ENCODE measurements at regions of chrX and their contacts with region 1.

Region 1: DNA sequence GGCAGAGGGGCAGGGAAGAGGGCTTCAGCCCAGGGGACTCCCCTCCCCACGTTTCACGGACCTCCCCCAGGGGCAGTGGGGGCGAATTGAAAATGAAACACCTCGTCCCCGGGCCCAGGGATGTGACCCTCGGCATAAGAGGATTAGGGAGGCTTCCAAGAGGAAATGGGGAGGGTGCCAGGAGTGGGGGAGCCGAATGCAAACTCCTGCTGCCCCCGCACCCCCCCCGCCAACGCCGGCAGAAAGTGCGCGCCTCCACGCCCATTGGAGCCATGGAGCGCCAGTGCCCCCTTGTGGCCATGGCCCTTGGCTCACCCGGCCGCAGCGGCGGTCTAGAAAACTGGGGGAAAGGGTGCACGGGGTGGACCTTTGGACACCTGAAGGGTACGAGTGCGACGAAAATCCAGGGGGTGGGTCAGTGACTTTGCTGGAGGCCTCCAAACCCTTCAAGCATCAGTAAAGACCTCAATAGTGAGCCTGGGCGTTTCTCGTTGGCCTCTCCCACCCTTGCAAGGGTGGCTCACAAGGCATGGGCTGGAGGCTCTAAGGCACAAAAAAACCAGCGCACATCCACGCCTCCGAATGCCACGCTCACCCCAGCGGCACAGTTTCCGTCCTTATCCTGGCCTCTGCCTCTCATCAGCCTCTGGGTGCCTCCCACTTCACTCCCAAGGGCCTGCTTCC is 120.8 kb upstream of the PJA1 start:
- DNase-seq: peak; percentile 64
- H3K4me3 ChIP-seq: peak overlapping the region in 3 of 4 donors; percentile 20 to 48 (median 31)
- H3K27ac ChIP-seq: peak overlapping the region; percentile 22 to 56 (median 52)
- H3K4me1 ChIP-seq: peaks cover 0 to 8% (median 3%) of the 10 kb centered on the region in 4 donors
- H3K27me3 ChIP-seq: no peaks in the 10 kb centered on the region
- CTCF ChIP-seq: peak; percentile 71 to 91 (median 77)
- EP300 ChIP-seq: no peak
- POLR2A ChIP-seq: no peak

Region 2: DNA sequence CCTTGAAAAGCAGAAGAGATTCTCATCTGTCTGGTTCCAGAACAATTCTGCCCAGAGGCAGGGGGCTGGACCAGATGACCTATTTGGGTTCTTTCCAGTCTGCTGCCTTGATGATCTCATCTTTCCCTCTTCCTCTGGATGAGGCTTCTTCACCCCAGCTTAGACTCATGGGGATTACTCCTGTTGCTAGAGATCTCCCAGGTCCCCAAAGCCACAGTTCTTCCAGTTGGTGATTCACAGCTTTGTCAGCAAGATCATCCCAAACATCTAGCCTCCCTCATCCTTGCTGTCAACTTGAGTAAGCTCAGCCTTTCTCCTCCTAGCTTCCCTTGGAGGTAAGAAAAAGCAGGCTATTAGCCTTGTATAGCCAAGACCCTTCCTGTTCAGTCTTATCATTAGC is 56.6 kb before region 1 on chrX:
- in situ Hi-C with region 1: no loop called
- intact Hi-C with region 1: loop called (anchors 5 kb)
- DNase-seq: no peak
- H3K4me3 ChIP-seq: no peak overlapping the region
- H3K27ac ChIP-seq: no peak overlapping the region
- H3K4me1 ChIP-seq: no peaks in the 10 kb centered on the region
- H3K27me3 ChIP-seq: no peaks in the 10 kb centered on the region
- CTCF ChIP-seq: no peak
- EP300 ChIP-seq: no peak
- POLR2A ChIP-seq: no peak

Region 3: GRCh38 chrX:69396916-69397315 is 110.9 kb after region 1 on chrX:
- in situ Hi-C with region 1: no loop called
- intact Hi-C with region 1: no loop called
- DNase-seq: no peak
- H3K4me3 ChIP-seq: no peak overlapping the region
- H3K27ac ChIP-seq: no peak overlapping the region
- H3K4me1 ChIP-seq: no peaks in the 10 kb centered on the region
- H3K27me3 ChIP-seq: no peaks in the 10 kb centered on the region
- CTCF ChIP-seq: no peak
- EP300 ChIP-seq: no peak
- POLR2A ChIP-seq: no peak